Right cardiac atrium (tissue), 5 donors: ENCODE measurements at regions of chr6 and their contacts with region 1.

Region 1: GRCh38 chr6:29649701-29650673 is 6.9 kb upstream of the MOG start:
- DNase-seq: peak; percentile 98 to 99 (median 98)
- ATAC-seq: peak; percentile 97
- H3K4me3 ChIP-seq: peak overlapping the region; percentile 74
- H3K27ac ChIP-seq: peak overlapping the region; percentile 100
- H3K4me1 ChIP-seq: no peaks in the 10 kb centered on the region
- H3K27me3 ChIP-seq: no peaks in the 10 kb centered on the region

Region 2: GRCh38 chr6:29685718-29686326 is 35.8 kb after region 1 on chr6:
- intact Hi-C with region 1: loop called in 1 of 4 experiments (anchors 5 kb)
- DNase-seq: peak; percentile 24 to 75 (median 75)
- ATAC-seq: peak; percentile 49 to 61
- H3K4me3 ChIP-seq: no peak overlapping the region
- H3K27ac ChIP-seq: no peak overlapping the region
- H3K4me1 ChIP-seq: no peaks in the 10 kb centered on the region
- H3K27me3 ChIP-seq: no peaks in the 10 kb centered on the region

Region 3: GRCh38 chr6:29696155-29697125 is 46.5 kb after region 1 on chr6:
- intact Hi-C with region 1: loop called in 1 of 4 experiments (anchors 2 kb)
- DNase-seq: no peak
- ATAC-seq: peak in 1 of 2 donors; percentile 50
- H3K4me3 ChIP-seq: no peak overlapping the region
- H3K27ac ChIP-seq: no peak overlapping the region
- H3K4me1 ChIP-seq: no peaks in the 10 kb centered on the region
- H3K27me3 ChIP-seq: no peaks in the 10 kb centered on the region